ENCODE measurements at regions of chr2 and their contacts with region 1.

Region 1: GRCh38 chr2:26330113-26330549 is 15.8 kb upstream of the SELENOI start:
- DNase-seq: peak; percentile 62 to 81 (median 76)
- ATAC-seq: peak; percentile 99
- H3K4me3 ChIP-seq: no peak overlapping the region
- H3K4me3 Mint-ChIP-seq: peak overlapping the region in 4 of 10 donors; percentile 6 to 41 (median 19)
- H3K27ac ChIP-seq: no peak overlapping the region
- H3K27ac Mint-ChIP-seq: peak overlapping the region in 3 of 9 donors; percentile 19 to 58 (median 25)
- H3K4me1 ChIP-seq: peaks cover 0 to 6% of the 10 kb centered on the region in 2 donors
- H3K4me1 Mint-ChIP-seq: peaks cover 3 to 19% (median 9%) of the 10 kb centered on the region in 7 donors
- H3K27me3 ChIP-seq: no peaks in the 10 kb centered on the region
- H3K27me3 Mint-ChIP-seq: peaks cover 0 to 4% (median 0%) of the 10 kb centered on the region in 5 donors

Region 2: DNA sequence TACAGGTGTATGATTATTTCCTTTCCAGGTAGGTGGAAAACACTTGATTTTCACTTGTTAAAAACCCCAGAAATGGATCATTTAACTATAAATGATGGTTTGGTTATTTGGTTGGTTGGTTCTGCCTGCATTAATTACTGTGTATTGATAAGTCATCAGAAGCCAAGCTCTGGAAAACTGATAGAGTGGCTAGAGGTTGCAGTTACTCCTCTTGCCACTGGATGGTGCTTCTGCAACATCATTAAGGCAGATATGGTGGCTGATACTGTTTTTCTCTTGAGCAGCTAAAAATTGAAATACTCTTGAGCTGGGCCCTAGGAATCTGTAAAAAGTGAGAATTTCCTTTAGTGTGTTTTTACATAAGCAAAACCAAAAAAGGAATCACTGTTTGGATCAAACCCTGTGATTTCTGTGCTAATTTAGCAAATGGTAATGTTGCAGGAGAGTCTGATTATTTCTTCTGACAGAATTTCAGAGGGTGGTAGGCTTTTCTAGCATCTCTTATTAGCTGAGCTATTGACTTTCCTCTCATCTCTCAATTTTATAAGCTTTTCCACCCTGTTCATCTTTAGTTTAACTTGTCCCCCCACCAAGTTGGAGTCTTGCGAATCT is 242.0 kb before region 1 on chr2:
- CTCF ChIA-PET with region 1: no interaction called
- POLR2A ChIA-PET with region 1: no interaction called
- intact Hi-C with region 1: loop called (anchors 1 to 2 kb)
- DNase-seq: peak in 7 of 9 donors; percentile 5 to 40 (median 28)
- ATAC-seq: peak; percentile 75
- H3K4me3 ChIP-seq: no peak overlapping the region
- H3K4me3 Mint-ChIP-seq: peak overlapping the region in 1 of 10 donors; percentile 0
- H3K27ac ChIP-seq: no peak overlapping the region
- H3K27ac Mint-ChIP-seq: peak overlapping the region in 1 of 9 donors; percentile 0
- H3K4me1 ChIP-seq: peaks cover 4 to 8% of the 10 kb centered on the region in 2 donors
- H3K4me1 Mint-ChIP-seq: peaks cover 34 to 52% (median 49%) of the 10 kb centered on the region in 7 donors
- H3K27me3 ChIP-seq: no peaks in the 10 kb centered on the region
- H3K27me3 Mint-ChIP-seq: no peaks in the 10 kb centered on the region

Region 3: DNA sequence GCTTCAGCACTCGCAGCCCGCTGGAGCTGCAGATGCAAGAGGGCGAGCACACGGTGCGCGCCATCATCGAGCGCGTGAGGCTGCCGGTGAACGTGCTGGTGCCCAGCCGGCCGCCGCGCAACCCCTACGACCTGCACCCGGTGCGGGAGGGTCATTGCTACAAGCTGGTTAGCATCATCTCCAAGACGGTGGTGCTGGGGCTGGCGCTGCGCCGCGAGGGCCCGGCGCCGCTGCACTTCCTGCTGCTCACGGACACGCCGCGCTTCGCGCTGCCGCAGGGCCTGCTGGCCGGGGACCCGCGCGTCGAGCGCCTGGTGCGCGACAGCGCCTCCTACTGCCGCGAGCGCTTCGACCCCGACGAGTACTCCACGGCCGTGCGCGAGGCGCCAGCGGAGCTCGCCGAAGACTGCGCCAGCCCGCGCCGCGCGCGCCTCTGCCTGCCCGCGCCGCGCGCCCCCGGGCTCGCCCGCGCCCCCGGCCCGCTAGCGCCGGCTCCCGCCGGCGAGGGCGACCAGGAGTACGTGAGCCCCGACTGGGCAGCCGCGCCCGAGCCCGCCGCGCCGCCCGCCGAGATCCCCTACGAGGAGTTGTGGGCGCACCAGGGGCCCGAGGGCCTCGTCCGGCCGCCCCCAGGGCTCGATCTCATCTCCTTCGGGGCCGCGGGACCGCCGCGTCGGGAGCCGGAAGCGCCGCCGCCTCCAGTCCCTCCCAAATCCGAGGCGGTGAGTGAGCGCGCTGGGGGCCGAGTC is 145.4 kb before region 1 on chr2:
- CTCF ChIA-PET with region 1: interaction called, 3 read pairs
- POLR2A ChIA-PET with region 1: no interaction called
- intact Hi-C with region 1: loop called in 1 of 2 experiments (anchors 2 kb)
- DNase-seq: peak; percentile 82 to 91 (median 88)
- ATAC-seq: peak; percentile 98
- H3K4me3 ChIP-seq: peak overlapping the region; percentile 68
- H3K4me3 Mint-ChIP-seq: peak overlapping the region; percentile 79 to 91 (median 85)
- H3K27ac ChIP-seq: peak overlapping the region; percentile 71
- H3K27ac Mint-ChIP-seq: peak overlapping the region in 7 of 9 donors; percentile 25 to 90 (median 67)
- H3K4me1 ChIP-seq: peaks cover 5 to 8% of the 10 kb centered on the region in 2 donors
- H3K4me1 Mint-ChIP-seq: peaks cover 6 to 30% (median 23%) of the 10 kb centered on the region in 7 donors
- H3K27me3 ChIP-seq: no peaks in the 10 kb centered on the region
- H3K27me3 Mint-ChIP-seq: peaks cover 11 to 23% (median 15%) of the 10 kb centered on the region in 5 donors

Region 4: GRCh38 chr2:26244309-26245121 is 85.6 kb before region 1 on chr2 and contains the starts of genes HADHA and HADHB:
- CTCF ChIA-PET with region 1: interaction called, 3 read pairs
- POLR2A ChIA-PET with region 1: no interaction called
- intact Hi-C with region 1: loop called (anchors 1 kb)
- DNase-seq: peak; percentile 76 to 91 (median 87)
- ATAC-seq: peak; percentile 92
- H3K4me3 ChIP-seq: peak within 1 kb of the TSS; percentile 99
- H3K4me3 Mint-ChIP-seq: peak within 1 kb of the TSS; percentile 96 to 100 (median 99)
- H3K27ac ChIP-seq: peak within 1 kb of the TSS; percentile 96
- H3K27ac Mint-ChIP-seq: peak within 1 kb of the TSS; percentile 98 to 100 (median 99)
- H3K4me1 ChIP-seq: peaks cover 13 to 19% of the 10 kb centered on the region in 2 donors
- H3K4me1 Mint-ChIP-seq: peaks cover 47 to 73% (median 57%) of the 10 kb centered on the region in 7 donors
- H3K27me3 ChIP-seq: no peaks in the 10 kb centered on the region
- H3K27me3 Mint-ChIP-seq: no peaks in the 10 kb centered on the region
- total RNA-seq, gene HADHA: 83.8 to 111 (median 102) TPM
- total RNA-seq, gene HADHB: 38.1 to 77.5 (median 64.2) TPM

Region 5: DNA sequence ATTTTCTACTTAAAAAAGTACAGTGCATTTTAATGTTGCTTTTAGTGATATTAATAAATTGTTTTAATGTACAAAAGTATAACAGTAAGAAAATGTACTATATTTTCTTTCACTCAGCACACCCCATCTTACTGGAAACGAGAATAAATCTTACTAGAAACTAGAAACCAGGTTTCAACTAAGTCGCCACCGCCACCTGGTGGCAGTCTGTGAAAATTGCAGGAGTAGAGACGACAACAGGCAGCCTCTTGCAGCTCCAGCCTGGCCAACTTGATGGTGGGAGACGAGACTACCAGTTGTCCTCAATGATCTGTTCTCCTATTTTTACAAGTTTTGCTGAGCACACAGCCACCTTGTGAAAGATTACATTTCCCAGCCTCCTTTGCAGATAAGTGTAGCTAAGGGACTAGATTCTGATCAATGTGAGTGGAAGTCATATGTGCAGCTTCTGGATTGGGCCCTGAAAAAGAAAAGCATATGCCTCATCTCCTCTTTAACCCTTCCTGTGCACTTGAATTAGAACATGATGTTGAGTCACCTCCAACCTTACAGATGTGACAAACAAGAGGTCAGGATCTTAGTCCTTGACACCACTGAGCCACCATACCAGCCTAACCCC is 139.1 kb after region 1 on chr2:
- CTCF ChIA-PET with region 1: no interaction called
- POLR2A ChIA-PET with region 1: no interaction called
- intact Hi-C with region 1: loop called in 1 of 2 experiments (anchors 5 kb)
- DNase-seq: peak in 8 of 9 donors; percentile 10 to 61 (median 34)
- ATAC-seq: peak; percentile 40
- H3K4me3 ChIP-seq: no peak overlapping the region
- H3K4me3 Mint-ChIP-seq: no peak overlapping the region
- H3K27ac ChIP-seq: no peak overlapping the region
- H3K27ac Mint-ChIP-seq: no peak overlapping the region
- H3K4me1 ChIP-seq: no peaks in the 10 kb centered on the region
- H3K4me1 Mint-ChIP-seq: no peaks in the 10 kb centered on the region
- H3K27me3 ChIP-seq: no peaks in the 10 kb centered on the region
- H3K27me3 Mint-ChIP-seq: no peaks in the 10 kb centered on the region

Region 6: GRCh38 chr2:26509141-26509540 is 179.0 kb after region 1 on chr2:
- CTCF ChIA-PET with region 1: no interaction called
- POLR2A ChIA-PET with region 1: no interaction called
- intact Hi-C with region 1: no loop called
- DNase-seq: no peak
- ATAC-seq: no peak
- H3K4me3 ChIP-seq: no peak overlapping the region
- H3K4me3 Mint-ChIP-seq: no peak overlapping the region
- H3K27ac ChIP-seq: no peak overlapping the region
- H3K27ac Mint-ChIP-seq: no peak overlapping the region
- H3K4me1 ChIP-seq: peaks cover 0 to under 1% of the 10 kb centered on the region in 2 donors
- H3K4me1 Mint-ChIP-seq: peaks cover 0 to 7% (median 3%) of the 10 kb centered on the region in 7 donors
- H3K27me3 ChIP-seq: no peaks in the 10 kb centered on the region
- H3K27me3 Mint-ChIP-seq: peaks cover 0 to 3% (median 0%) of the 10 kb centered on the region in 5 donors

Region 7: DNA sequence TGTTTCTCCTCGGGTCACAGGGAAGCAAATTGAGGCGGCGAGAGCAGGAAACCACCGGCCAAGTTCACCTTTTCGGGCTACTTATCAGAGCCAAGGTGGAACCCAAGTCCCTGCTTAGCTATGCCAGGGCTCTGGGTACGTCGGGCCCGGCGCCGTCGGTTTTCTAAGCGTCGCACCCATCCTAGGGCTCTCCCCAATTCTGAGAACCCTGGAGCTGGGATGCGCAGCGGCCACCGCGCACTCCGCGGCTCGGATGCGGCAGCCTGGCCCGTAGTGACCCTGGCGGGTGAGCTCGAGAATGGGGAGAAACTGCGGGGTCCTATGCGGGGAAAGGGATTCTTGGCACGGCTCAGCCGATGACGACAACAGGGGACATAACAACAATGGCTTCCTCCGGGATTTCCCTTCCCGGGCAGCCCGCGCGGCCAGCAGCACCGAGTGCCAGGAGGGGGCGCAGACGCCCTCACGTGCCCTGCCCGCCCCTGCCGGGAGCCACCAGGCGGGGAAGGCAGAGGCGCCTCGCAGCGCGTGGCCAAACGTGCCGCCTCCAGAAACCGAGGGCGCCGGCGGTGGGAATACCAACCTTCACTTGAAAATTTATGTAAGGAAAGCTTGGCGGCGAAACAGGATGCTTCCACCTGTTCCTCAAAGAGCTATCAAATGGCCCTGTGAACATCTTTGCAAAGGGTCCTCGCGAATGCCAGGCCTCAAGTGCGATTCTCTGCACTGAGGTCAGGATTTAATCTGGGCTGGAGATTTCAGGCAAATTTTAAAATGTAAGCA is 934.8 kb after region 1 on chr2:
- CTCF ChIA-PET with region 1: no interaction called
- POLR2A ChIA-PET with region 1: no interaction called
- intact Hi-C with region 1: no loop called
- DNase-seq: peak in 8 of 9 donors; percentile 39 to 63 (median 46)
- ATAC-seq: peak; percentile 85
- H3K4me3 ChIP-seq: peak overlapping the region; percentile 59
- H3K4me3 Mint-ChIP-seq: peak overlapping the region in 9 of 10 donors; percentile 59 to 97 (median 85)
- H3K27ac ChIP-seq: no peak overlapping the region
- H3K27ac Mint-ChIP-seq: peak overlapping the region in 2 of 9 donors; percentile 2 to 38
- H3K4me1 ChIP-seq: peaks cover 8 to 23% of the 10 kb centered on the region in 2 donors
- H3K4me1 Mint-ChIP-seq: peaks cover 23 to 33% (median 29%) of the 10 kb centered on the region in 7 donors
- H3K27me3 ChIP-seq: peaks cover 6 to 18% of the 10 kb centered on the region in 2 donors
- H3K27me3 Mint-ChIP-seq: peaks cover 34 to 47% (median 40%) of the 10 kb centered on the region in 5 donors